Activated CD4-positive, alpha-beta memory T cell treated with anti-CD3 and anti-CD28 coated beads, Interleukin-2, amount 10 ng/mL, durations not matched to agents 7 days and 5 days (primary cell): ENCODE measurements at regions of chr5 and their contacts with region 1.

Region 1: GRCh38 chr5:80216753-80217596 is 38.9 kb downstream of the SERINC5 start:
- DNase-seq: peak; percentile 54
- H3K4me3 Mint-ChIP-seq: peak overlapping the region; percentile 69
- H3K27ac Mint-ChIP-seq: peak overlapping the region; percentile 82
- H3K4me1 Mint-ChIP-seq: peaks cover 79% of the 10 kb centered on the region
- H3K27me3 Mint-ChIP-seq: no peaks in the 10 kb centered on the region

Region 2: GRCh38 chr5:80060966-80061365 is 156.0 kb before region 1 on chr5:
- CTCF ChIA-PET with region 1: no interaction called
- POLR2A ChIA-PET with region 1: no interaction called
- DNase-seq: no peak
- H3K4me3 Mint-ChIP-seq: no peak overlapping the region
- H3K27ac Mint-ChIP-seq: no peak overlapping the region
- H3K4me1 Mint-ChIP-seq: peaks cover 12% of the 10 kb centered on the region
- H3K27me3 Mint-ChIP-seq: no peaks in the 10 kb centered on the region

Region 3: DNA sequence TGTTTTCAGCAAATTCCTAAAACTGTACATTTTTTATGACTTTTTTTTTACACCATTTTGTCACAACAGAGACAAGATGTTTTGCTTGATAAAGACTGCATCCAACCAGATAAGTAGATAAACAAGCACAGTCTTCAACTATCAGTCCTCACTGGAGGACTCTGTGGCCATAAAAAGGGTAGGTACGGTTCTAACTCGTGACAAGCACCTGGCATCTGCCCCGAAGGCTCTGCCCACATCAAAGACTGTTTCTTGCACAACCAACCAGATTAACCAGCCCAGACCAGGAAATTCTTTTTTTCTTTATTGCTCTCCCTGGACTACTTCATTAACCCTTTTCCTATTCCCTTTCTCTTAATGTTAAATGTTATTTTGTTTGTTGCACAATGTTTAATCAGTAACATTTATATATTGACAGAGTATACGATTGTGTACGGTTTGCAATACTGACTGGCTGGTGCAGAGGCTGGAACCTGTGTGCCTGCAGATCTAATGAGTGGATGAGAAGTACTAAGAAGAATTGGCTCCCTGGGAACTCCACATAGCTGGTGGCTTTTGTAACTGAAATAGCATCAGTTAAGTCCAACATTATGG is 35.3 kb before region 1 on chr5:
- CTCF ChIA-PET with region 1: no interaction called
- POLR2A ChIA-PET with region 1: interaction called, 10 read pairs
- DNase-seq: peak; percentile 62
- H3K4me3 Mint-ChIP-seq: peak overlapping the region; percentile 40
- H3K27ac Mint-ChIP-seq: peak overlapping the region; percentile 89
- H3K4me1 Mint-ChIP-seq: peaks cover 71% of the 10 kb centered on the region
- H3K27me3 Mint-ChIP-seq: no peaks in the 10 kb centered on the region

Region 4: DNA sequence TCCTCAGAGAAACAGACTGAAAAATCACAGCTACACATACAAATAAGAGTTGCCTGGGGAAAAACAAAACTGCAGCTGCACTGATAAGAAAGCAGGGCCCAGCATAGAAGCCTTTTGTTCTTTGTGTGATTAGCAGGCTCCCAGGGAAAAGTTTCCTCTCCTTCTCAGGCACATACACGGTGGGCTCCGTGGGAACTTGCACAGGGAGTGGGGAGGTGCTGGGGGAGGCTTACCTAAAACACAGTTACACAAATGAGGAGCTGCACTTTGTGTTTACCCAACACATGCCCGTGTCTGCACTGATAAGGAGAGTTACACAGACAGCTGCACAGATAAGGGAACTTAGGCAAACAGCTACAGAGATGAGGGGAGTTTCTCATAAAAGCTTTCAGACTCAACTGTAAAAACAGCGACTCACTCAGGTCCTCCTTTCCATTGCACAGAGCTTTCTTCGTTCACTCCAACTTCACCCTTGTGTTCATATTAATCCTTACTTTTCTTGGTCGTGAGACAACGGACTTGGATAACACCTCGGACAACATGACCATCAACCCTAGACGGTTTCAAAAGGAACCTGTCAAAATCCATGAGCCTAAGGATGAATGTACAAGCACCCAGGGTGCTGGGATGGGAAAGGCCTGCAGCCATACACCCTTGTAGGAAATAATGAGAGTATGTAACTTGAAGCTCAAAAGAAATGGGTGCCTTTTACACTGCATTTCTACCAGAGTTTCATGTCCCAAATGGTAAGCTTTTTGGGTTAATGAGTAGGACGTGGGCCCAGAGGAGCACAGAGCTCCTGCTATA is 12.0 kb before region 1 on chr5:
- CTCF ChIA-PET with region 1: interaction called, 7 read pairs
- POLR2A ChIA-PET with region 1: interaction called, 17 read pairs
- DNase-seq: no peak
- H3K4me3 Mint-ChIP-seq: no peak overlapping the region
- H3K27ac Mint-ChIP-seq: peak overlapping the region; percentile 55
- H3K4me1 Mint-ChIP-seq: peaks cover 60% of the 10 kb centered on the region
- H3K27me3 Mint-ChIP-seq: no peaks in the 10 kb centered on the region

Region 5: GRCh38 chr5:80246001-80246758 is 29.2 kb after region 1 on chr5:
- CTCF ChIA-PET with region 1: interaction called, 5 read pairs
- POLR2A ChIA-PET with region 1: interaction called, 24 read pairs
- DNase-seq: no peak
- H3K4me3 Mint-ChIP-seq: peak overlapping the region; percentile 42
- H3K27ac Mint-ChIP-seq: peak overlapping the region; percentile 83
- H3K4me1 Mint-ChIP-seq: peaks cover 59% of the 10 kb centered on the region
- H3K27me3 Mint-ChIP-seq: no peaks in the 10 kb centered on the region

Region 6: DNA sequence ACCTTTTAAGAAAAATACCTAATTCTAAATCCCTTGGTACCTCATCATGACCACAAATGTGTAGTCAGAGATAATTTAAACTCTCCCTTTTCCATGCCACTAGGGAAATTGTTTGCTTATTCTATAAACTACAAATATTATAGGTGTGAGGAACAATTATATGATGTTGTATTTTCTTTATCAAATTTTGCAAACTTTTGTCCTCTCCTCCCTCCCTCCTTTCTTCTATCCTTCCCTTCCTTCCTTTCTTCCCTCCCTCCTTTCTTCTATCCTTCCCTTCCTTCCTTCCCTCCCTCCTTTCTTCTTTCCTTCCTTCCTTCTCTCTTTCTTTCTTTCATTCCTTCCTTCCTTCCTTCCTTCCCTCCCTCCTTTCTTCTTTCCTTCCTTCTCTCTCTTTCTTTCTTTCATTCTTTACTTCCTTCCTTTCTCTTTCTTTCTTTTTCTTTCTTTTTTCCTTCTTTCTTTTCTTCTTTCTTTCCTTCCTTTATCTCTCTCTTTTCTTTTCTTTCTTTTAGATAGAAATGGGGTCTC is 144.0 kb after region 1 on chr5:
- CTCF ChIA-PET with region 1: no interaction called
- POLR2A ChIA-PET with region 1: no interaction called
- DNase-seq: no peak
- H3K4me3 Mint-ChIP-seq: no peak overlapping the region
- H3K27ac Mint-ChIP-seq: no peak overlapping the region
- H3K4me1 Mint-ChIP-seq: no peaks in the 10 kb centered on the region
- H3K27me3 Mint-ChIP-seq: peaks cover 3% of the 10 kb centered on the region